Tibial artery (tissue), 4 donors: ENCODE measurements at regions of chr3 and their contacts with region 1.

Region 1: GRCh38 chr3:26264708-26265107 is 357.9 kb upstream of the LRRC3B start:
- DNase-seq: no peak
- H3K4me3 ChIP-seq: no peak overlapping the region
- H3K27ac ChIP-seq: no peak overlapping the region
- H3K4me1 ChIP-seq: peaks cover 0 to 4% (median 0%) of the 10 kb centered on the region in 4 donors
- H3K27me3 ChIP-seq: no peaks in the 10 kb centered on the region
- CTCF ChIP-seq: no peak

Region 2: GRCh38 chr3:26753095-26753494 is 488.4 kb after region 1 on chr3:
- intact Hi-C with region 1: loop called (anchors 5 kb)
- DNase-seq: no peak
- H3K4me3 ChIP-seq: no peak overlapping the region
- H3K27ac ChIP-seq: no peak overlapping the region
- H3K4me1 ChIP-seq: no peaks in the 10 kb centered on the region
- H3K27me3 ChIP-seq: no peaks in the 10 kb centered on the region
- CTCF ChIP-seq: no peak